PC-3 (cell line): ENCODE measurements at regions of chr5 and their contacts with region 1.

Region 1: DNA sequence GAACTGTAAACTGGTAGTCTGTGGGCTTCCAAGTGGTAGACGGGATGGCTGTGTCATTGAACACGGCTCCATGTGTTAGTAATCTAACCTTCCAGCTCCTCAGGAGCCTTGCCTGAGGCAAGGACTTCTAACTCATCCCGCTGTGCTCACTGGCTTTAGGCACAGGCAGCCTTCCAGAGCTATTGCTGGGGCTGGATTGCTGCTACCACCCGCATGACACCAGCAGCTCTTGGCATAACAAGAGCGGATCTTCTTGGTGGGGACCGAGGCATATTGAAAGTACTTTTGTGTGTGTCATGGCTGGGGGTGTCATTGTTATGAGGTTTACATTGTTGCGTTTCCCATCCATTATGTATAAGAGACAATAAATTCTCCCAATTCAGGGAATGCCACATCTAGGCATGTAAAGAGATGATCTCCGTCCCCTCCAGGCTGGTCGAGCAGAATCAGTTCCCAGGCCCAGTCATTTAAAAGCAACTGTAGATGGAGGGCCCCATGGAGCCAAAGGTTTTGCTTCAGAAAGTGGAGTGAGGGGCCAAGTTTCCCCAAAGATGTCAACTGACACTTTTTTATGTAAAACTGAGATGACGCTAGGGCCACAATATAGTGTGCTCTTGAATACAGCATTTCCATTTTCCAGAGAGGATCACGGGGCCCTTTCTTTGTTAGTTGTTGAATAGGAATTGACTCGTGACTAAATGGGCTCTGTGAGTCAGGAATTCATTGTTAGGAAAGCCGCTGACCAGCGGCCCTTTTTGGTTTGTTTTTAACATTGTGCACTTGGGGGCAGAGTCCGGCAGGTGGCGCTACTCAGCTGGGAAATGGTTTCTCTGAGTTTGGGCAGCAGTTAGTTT is 759.6 kb downstream of the TAF11L14 start:
- DNase-seq: peak; percentile 87
- ATAC-seq: peak; percentile 84
- H3K4me3 ChIP-seq: no peak overlapping the region; the same call in 1 of the 2 replicates
- H3K27ac ChIP-seq: no peak overlapping the region
- H3K4me1 ChIP-seq: 0 out of 2 replicates have a peak, but pooled peaks cover 3% of the 10 kb centered on the region
- H3K27me3 ChIP-seq: peaks cover 2% of the 10 kb centered on the region; the same call in 1 of the 2 replicates
- CTCF ChIP-seq: peak; percentile 97

Region 2: GRCh38 chr5:17910318-17910717 is 483.5 kb before region 1 on chr5:
- CTCF ChIA-PET with region 1: no interaction called
- POLR2A ChIA-PET with region 1: no interaction called
- intact Hi-C with region 1: no loop called
- DNase-seq: peak; percentile 91
- ATAC-seq: peak; percentile 98
- H3K4me3 ChIP-seq: no peak overlapping the region
- H3K27ac ChIP-seq: no peak overlapping the region
- H3K4me1 ChIP-seq: peaks cover 13% of the 10 kb centered on the region
- H3K27me3 ChIP-seq: no peaks in the 10 kb centered on the region
- CTCF ChIP-seq: no peak

Region 3: GRCh38 chr5:18465833-18466591 is 72.2 kb after region 1 on chr5:
- CTCF ChIA-PET with region 1: interaction called, 3 read pairs
- POLR2A ChIA-PET with region 1: no interaction called
- intact Hi-C with region 1: loop called (anchors 1 kb)
- DNase-seq: peak; percentile 82
- ATAC-seq: peak; percentile 87
- H3K4me3 ChIP-seq: peak overlapping the region; percentile 60
- H3K27ac ChIP-seq: no peak overlapping the region
- H3K4me1 ChIP-seq: 0 out of 2 replicates have a peak, but pooled peaks cover 6% of the 10 kb centered on the region
- H3K27me3 ChIP-seq: no peaks in the 10 kb centered on the region
- CTCF ChIP-seq: peak; percentile 84